ENCODE measurements at regions of chr3 and their contacts with region 1.

Region 1: GRCh38 chr3:184250167-184250828 is 826 bp downstream of the EEF1AKMT4 start:
- DNase-seq: peak; percentile 79
- ATAC-seq: peak; percentile 68
- H3K4me3 Mint-ChIP-seq: peak overlapping the region; percentile 90
- H3K27ac Mint-ChIP-seq: peak overlapping the region; percentile 94
- H3K4me1 Mint-ChIP-seq: peaks cover 19% of the 10 kb centered on the region
- H3K27me3 Mint-ChIP-seq: no peaks in the 10 kb centered on the region
- CTCF ChIP-seq: peak; percentile 88

Region 2: DNA sequence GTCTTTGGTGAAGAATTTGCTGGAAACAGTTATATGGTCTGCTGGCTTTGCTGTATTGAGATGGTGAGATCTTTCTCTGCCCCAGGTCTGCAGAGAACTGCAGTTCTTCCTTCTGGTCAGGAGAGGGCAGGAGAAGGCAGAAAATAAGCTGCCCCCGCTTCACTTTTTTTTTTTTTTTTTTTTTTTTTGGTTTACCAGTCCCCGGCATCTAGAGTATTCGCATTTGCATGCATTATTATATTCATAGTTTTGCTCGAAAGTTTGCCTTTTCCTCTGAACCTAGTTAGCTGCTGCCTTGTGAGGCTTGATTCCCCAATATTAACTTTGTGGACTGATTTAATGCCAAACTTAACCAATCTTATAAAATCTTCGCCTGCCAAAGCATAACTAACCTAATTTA is 355.0 kb before region 1 on chr3:
- CTCF ChIA-PET with region 1: interaction called, 9 read pairs
- POLR2A ChIA-PET with region 1: interaction called, 3 read pairs
- intact Hi-C with region 1: loop called (anchors 1 kb)
- DNase-seq: no peak
- ATAC-seq: peak; percentile 97
- H3K4me3 Mint-ChIP-seq: no peak overlapping the region
- H3K27ac Mint-ChIP-seq: no peak overlapping the region
- H3K4me1 Mint-ChIP-seq: peaks cover 4% of the 10 kb centered on the region
- H3K27me3 Mint-ChIP-seq: peaks cover 22% of the 10 kb centered on the region
- CTCF ChIP-seq: no peak

Region 3: GRCh38 chr3:184145111-184145524 is 105.2 kb before region 1 on chr3:
- CTCF ChIA-PET with region 1: interaction called, 3 read pairs
- POLR2A ChIA-PET with region 1: no interaction called
- intact Hi-C with region 1: loop called (anchors 1 kb)
- DNase-seq: no peak
- ATAC-seq: peak; percentile 69
- H3K4me3 Mint-ChIP-seq: no peak overlapping the region
- H3K27ac Mint-ChIP-seq: no peak overlapping the region
- H3K4me1 Mint-ChIP-seq: peaks cover 12% of the 10 kb centered on the region
- H3K27me3 Mint-ChIP-seq: no peaks in the 10 kb centered on the region
- CTCF ChIP-seq: no peak

Region 4: DNA sequence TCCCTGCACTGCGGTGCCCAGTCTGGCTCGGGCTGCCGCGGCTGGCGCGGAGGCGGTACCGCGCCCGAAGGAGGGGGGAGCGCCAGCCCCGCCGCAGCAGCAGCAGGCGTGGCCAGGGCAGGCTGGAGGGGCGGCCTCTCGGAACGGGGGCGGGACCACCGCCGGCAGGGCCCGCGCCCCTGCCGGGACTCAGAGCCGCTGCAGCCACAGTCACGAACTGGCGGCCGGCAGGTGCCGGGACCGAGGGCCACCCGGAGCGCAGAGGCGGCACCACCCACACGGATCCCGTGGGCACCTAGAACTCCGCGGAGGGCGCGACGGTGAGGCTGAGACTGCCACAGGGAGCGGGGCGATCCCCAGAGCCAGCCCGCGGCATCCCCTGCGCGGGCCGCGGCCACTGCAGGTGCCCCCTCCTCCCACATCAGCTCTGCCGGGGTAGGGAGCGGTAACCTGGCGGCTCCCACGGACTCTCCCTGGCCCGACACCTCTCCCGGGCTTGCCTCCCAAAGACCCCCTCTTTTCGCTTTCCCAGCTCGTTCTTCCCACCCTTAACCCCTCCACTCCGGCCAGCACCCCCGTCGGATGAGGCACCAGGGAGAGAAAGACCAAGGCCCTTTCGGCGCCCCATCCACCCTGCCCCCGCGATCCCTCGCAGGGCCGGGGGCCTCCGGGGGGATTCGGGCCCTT is 20.8 kb before region 1 on chr3 and contains the start of gene VWA5B2:
- CTCF ChIA-PET with region 1: interaction called, 17 read pairs
- POLR2A ChIA-PET with region 1: interaction called, 3 read pairs
- intact Hi-C with region 1: loop called (anchors 1 kb)
- DNase-seq: peak; percentile 79
- ATAC-seq: peak; percentile 97
- H3K4me3 Mint-ChIP-seq: peak within 1 kb of the TSS; percentile 77
- H3K27ac Mint-ChIP-seq: no peak within 1 kb of the TSS
- H3K4me1 Mint-ChIP-seq: peaks cover 15% of the 10 kb centered on the region
- H3K27me3 Mint-ChIP-seq: peaks cover 45% of the 10 kb centered on the region
- CTCF ChIP-seq: no peak
- total RNA-seq, gene VWA5B2: 0.42 and 0.76 TPM in 2 replicates

Region 5: DNA sequence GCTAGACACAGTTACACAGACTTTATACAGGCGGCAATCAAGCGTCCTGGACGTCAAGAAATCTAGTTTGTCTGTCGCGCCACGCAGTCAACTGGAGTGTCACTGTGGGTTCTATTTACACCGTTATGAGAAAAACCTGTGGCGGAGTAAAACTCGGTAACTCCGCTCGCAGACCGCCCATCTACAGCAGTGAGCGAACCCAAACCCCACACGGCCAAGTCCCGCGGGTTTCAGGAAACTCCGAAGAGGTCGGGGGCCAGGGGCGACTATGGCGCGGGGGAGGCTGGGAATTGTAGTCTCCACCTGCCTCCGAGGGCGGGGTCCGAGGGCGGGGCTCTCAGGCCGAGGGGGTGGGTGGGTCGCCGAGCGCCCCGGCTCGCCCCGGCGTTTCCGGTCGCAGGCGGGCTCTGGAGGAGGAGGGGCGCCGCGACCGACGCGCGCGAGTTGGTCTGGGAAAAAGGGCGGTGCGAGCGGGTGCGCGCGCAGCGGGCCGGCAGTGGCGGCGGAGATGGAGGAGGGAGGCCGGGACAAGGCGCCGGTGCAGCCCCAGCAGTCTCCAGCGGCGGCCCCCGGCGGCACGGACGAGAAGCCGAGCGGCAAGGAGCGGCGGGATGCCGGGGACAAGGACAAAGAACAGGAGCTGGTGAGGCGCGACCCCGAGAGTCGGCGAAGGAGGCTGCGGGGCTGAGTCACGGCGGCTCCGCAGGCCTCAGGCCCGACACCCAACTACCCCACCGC is 48.6 kb after region 1 on chr3 and contains the start of gene PSMD2:
- CTCF ChIA-PET with region 1: no interaction called
- POLR2A ChIA-PET with region 1: no interaction called
- intact Hi-C with region 1: loop called (anchors 1 kb)
- DNase-seq: peak; percentile 96
- ATAC-seq: peak; percentile 96
- H3K4me3 Mint-ChIP-seq: peak within 1 kb of the TSS; percentile 95
- H3K27ac Mint-ChIP-seq: peak within 1 kb of the TSS; percentile 88
- H3K4me1 Mint-ChIP-seq: peaks cover 23% of the 10 kb centered on the region
- H3K27me3 Mint-ChIP-seq: no peaks in the 10 kb centered on the region
- CTCF ChIP-seq: no peak
- total RNA-seq, gene PSMD2: 206 and 210 TPM in 2 replicates

Region 6: GRCh38 chr3:184362668-184363540 is 112.6 kb after region 1 on chr3:
- CTCF ChIA-PET with region 1: interaction called, 3 read pairs
- POLR2A ChIA-PET with region 1: no interaction called
- intact Hi-C with region 1: loop called (anchors 1 kb)
- DNase-seq: peak; percentile 93
- ATAC-seq: peak; percentile 86
- H3K4me3 Mint-ChIP-seq: peak overlapping the region; percentile 96
- H3K27ac Mint-ChIP-seq: peak overlapping the region; percentile 95
- H3K4me1 Mint-ChIP-seq: peaks cover 25% of the 10 kb centered on the region
- H3K27me3 Mint-ChIP-seq: no peaks in the 10 kb centered on the region
- CTCF ChIP-seq: no peak

Region 7: DNA sequence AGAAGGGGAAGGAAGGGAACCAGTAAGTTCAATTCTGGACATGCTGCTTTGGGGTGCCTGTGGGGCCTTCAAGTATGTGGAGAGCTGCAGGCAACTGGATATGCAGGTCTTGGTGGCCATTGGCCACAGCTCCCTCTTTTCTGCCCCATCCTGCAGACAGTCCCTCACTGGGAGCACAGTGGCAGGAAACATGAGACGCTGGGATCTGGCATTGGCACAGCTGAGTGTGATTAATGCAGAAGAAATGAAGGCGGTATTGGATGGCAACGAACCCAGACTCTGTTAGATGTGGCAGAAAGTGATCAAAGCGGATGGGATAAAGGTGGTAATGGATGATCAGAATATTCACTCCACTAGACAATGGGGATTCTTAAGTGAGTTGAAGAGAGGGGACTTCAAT is 538.5 kb after region 1 on chr3:
- CTCF ChIA-PET with region 1: no interaction called
- POLR2A ChIA-PET with region 1: no interaction called
- intact Hi-C with region 1: no loop called
- DNase-seq: no peak
- ATAC-seq: no peak
- H3K4me3 Mint-ChIP-seq: no peak overlapping the region
- H3K27ac Mint-ChIP-seq: no peak overlapping the region
- H3K4me1 Mint-ChIP-seq: peaks cover 21% of the 10 kb centered on the region
- H3K27me3 Mint-ChIP-seq: peaks cover 5% of the 10 kb centered on the region
- CTCF ChIP-seq: no peak

Region 8: DNA sequence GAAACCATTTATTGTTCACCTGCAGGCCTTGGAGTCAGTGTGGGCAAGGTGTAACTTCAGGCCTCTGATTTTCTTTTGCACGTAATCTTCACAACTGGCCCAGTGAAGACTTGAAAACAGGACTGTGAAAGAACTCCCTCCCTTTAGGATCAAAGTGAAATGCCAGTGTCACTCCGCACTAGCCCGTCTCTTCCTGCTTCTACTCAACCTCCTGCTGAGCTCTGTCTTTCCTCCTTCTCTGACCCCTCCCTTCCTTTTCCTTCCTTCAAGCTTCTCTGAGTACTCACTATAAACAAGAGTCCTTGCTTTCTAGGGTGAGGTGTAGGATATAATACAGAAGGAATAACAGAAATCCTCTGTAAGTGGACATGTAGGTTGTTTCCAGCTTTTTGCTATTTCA is 1220.0 kb after region 1 on chr3:
- CTCF ChIA-PET with region 1: no interaction called
- POLR2A ChIA-PET with region 1: no interaction called
- intact Hi-C with region 1: no loop called
- DNase-seq: no peak
- ATAC-seq: no peak
- H3K4me3 Mint-ChIP-seq: no peak overlapping the region
- H3K27ac Mint-ChIP-seq: no peak overlapping the region
- H3K4me1 Mint-ChIP-seq: peaks cover 4% of the 10 kb centered on the region
- H3K27me3 Mint-ChIP-seq: no peaks in the 10 kb centered on the region
- CTCF ChIP-seq: no peak

Region 9: DNA sequence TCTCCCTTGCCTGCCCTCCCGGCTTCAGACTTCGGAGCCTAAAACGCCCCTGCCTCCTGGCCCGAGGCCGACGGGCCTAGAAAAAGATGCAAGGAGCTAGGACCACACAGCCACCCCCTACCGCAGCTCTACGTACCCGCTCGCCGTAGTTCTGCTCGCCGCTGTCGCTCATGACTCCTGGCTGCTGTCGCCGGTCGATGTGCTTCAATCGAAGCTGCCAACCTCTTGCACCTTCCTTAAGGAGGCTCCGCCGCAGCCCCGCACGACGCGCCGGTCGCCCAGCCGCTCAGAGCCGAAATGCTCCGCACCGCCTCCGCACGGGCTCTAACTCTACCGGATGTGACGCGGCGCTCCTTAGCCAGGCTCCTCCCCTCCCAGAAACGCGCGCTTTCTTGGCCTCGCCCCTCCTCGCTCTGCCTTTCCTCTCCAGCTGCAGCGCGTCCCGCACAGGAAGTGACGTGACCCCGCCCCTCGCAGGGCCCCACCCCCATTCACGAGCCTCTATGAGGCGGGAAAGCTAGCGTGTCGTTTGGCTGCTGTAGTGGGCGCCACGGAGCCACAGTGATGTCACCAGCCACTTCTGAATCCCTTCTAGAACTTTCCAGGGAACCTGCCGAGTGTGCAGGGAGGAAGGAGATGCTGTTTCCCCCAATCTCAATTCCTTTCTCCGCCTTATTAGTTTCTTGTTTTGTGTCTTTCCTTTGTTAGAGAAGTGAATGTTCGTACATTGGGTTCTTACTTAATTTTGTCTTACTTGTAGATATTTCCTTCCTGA is 1687.6 kb after region 1 on chr3 and contains the start of gene TRA2B:
- CTCF ChIA-PET with region 1: no interaction called
- POLR2A ChIA-PET with region 1: no interaction called
- intact Hi-C with region 1: loop called (anchors 2 kb)
- DNase-seq: peak; percentile 96
- ATAC-seq: peak; percentile 87
- H3K4me3 Mint-ChIP-seq: peak within 1 kb of the TSS; percentile 99
- H3K27ac Mint-ChIP-seq: peak within 1 kb of the TSS; percentile 100
- H3K4me1 Mint-ChIP-seq: peaks cover 45% of the 10 kb centered on the region
- H3K27me3 Mint-ChIP-seq: no peaks in the 10 kb centered on the region
- CTCF ChIP-seq: no peak
- total RNA-seq, gene TRA2B: 213 and 219 TPM in 2 replicates

Measured in activated B cell treated with CpG ODN at 0.5 μM for 24 hours (primary cell).